ENCODE measurements at regions of chr3 and their contacts with region 1.

Region 1: GRCh38 chr3:121557426-121557934 is 10.3 kb upstream of the ARGFX start:
- DNase-seq: peak in 1 of 2 experiments; percentile 16
- H3K4me3 ChIP-seq: no peak overlapping the region
- H3K27ac ChIP-seq: no peak overlapping the region
- H3K4me1 ChIP-seq: peaks cover 3 to 8% (median 4%) of the 10 kb centered on the region in 4 experiments; a peak in 4 of 7 replicates
- H3K27me3 ChIP-seq: no peaks in the 10 kb centered on the region; a peak in 1 of 7 replicates
- CTCF ChIP-seq: no peak
- EP300 ChIP-seq: no peak
- POLR2A ChIP-seq: no peak
- RAD21 ChIP-seq: no peak

Region 2: GRCh38 chr3:121545574-121546455 is 11.7 kb before region 1 on chr3 and contains the start of gene POLQ:
- CTCF ChIA-PET with region 1: interaction called, 12 read pairs
- POLR2A ChIA-PET with region 1: interaction called, 3 read pairs
- DNase-seq: peak; percentile 49 to 85
- H3K4me3 ChIP-seq: peak within 1 kb of the TSS; percentile 86 to 98 (median 94)
- H3K27ac ChIP-seq: peak within 1 kb of the TSS; percentile 55
- H3K4me1 ChIP-seq: 0 out of 7 replicates have a peak, but pooled peaks cover 0 to 2% (median 0%) of the 10 kb centered on the region in 4 experiments
- H3K27me3 ChIP-seq: no peaks in the 10 kb centered on the region
- CTCF ChIP-seq: no peak
- EP300 ChIP-seq: no peak
- POLR2A ChIP-seq: peak; percentile 66 to 88
- RAD21 ChIP-seq: no peak
- total RNA-seq, gene POLQ: 15.3 and 16.1 TPM in 2 replicates